ENCODE measurements at regions of chr5 and their contacts with region 1.

Region 1: DNA sequence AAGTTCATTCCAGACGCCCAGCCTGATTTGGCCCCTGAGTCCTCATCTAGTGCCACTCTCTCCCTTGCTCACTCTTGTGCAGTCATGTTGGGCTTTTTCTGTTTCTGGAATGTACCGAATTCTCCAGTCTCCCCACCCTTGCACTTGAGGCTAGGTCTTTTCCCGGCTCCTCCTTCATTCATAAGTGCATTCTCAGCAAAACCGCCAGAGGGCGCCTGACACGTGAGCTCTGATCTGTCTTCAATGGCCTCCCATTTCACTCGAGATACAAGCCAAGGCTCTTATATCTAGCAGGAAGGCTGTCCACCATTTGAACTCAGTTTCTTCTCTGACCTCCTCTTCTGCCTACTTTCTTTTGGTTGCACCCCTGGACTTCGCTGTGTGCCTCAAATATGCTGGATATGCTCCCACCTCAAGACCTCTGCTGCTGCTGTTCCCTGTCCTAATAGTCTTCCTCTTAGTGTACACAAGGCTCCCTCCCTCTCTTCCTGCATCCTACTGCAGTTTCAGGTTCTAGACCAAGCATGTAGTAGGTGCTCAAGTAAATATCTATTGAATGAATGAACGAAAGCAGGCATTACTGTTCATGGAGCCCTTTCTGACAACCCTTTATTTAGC is 568.1 kb upstream of the WWC1 start:
- DNase-seq: peak; percentile 89

Region 2: GRCh38 chr5:167945542-167946384 is 222.4 kb after region 1 on chr5:
- intact Hi-C with region 1: loop called in 1 of 2 experiments (anchors 2 kb)
- DNase-seq: no peak

Region 3: GRCh38 chr5:168209997-168210396 is 486.6 kb after region 1 on chr5:
- intact Hi-C with region 1: loop called in 1 of 2 experiments (anchors 5 kb)
- DNase-seq: no peak

Region 4: DNA sequence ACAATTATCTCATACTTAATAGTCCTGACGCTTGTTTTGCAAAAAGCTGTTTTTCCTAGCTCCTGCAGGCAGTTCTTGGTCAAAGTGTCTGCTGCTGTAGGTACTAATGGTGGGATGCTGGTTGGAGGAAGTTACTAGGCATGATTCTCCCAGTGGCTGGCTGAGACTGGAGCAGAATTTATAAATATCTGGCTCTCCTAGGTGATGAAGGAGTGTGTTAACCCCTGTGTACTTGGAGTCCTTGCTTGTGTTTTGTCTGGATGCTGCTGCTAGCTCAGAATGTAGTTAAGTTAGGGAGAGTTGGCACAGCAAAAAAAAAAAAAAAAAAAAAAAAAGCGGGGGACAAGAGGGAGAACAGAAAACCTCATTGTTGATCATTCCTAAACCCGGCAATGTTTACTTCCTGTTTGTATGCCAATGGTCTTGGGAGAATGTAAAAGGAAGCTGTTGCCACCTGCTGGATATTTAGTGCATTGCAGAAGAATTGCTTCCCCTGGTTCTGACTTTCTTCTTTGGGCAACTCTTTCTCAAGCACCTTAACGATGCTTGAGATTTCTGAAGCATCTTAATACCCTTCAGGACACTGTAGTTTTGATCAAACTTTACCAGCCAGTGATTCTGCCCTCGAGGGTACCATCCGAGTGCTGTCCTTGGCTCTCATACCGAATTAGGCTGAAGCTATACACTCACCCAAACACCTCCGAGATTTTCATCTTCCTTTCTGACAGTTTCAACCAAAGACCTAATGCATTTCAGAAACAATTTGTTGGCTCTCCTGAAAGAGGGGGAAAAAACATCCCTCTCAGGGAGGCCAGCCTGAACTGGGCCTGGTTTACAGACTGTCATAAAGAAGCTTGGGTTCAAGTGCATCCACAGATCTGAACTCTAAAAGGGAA is 496.4 kb after region 1 on chr5:
- intact Hi-C with region 1: loop called (anchors 5 kb)
- DNase-seq: no peak